ENCODE measurements at regions of chr5 and their contacts with region 1.

Region 1: GRCh38 chr5:59360130-59360555 is 533.4 kb downstream of the PDE4D start:
- DNase-seq: no peak
- ATAC-seq: no peak
- H3K4me3 ChIP-seq: no peak overlapping the region
- H3K27ac ChIP-seq: no peak overlapping the region
- H3K4me1 ChIP-seq: no peaks in the 10 kb centered on the region
- H3K27me3 ChIP-seq: no peaks in the 10 kb centered on the region
- CTCF ChIP-seq: no peak

Region 2: DNA sequence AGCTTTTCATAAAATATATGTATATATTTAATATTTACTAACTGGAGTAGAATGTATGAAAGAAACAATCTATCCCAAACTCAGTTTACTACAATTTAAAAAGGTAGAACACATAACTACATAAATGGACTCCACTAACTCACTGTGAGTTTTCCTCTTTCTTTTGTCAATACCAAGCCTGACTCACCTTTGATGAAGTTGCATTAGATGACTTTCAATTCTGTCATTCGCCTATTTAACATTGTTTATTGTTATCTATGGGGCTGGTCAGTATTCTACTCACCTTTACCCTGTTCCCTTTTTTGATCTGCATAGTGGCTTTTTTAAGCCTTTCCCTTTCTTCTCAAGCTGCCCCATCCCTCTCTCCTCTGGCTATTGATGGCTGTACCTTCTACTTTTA is 147.5 kb before region 1 on chr5:
- CTCF ChIA-PET with region 1: no interaction called
- POLR2A ChIA-PET with region 1: no interaction called
- intact Hi-C with region 1: no loop called
- DNase-seq: peak; percentile 34
- ATAC-seq: no peak
- H3K4me3 ChIP-seq: no peak overlapping the region
- H3K27ac ChIP-seq: no peak overlapping the region
- H3K4me1 ChIP-seq: no peaks in the 10 kb centered on the region
- H3K27me3 ChIP-seq: no peaks in the 10 kb centered on the region
- CTCF ChIP-seq: no peak

Region 3: DNA sequence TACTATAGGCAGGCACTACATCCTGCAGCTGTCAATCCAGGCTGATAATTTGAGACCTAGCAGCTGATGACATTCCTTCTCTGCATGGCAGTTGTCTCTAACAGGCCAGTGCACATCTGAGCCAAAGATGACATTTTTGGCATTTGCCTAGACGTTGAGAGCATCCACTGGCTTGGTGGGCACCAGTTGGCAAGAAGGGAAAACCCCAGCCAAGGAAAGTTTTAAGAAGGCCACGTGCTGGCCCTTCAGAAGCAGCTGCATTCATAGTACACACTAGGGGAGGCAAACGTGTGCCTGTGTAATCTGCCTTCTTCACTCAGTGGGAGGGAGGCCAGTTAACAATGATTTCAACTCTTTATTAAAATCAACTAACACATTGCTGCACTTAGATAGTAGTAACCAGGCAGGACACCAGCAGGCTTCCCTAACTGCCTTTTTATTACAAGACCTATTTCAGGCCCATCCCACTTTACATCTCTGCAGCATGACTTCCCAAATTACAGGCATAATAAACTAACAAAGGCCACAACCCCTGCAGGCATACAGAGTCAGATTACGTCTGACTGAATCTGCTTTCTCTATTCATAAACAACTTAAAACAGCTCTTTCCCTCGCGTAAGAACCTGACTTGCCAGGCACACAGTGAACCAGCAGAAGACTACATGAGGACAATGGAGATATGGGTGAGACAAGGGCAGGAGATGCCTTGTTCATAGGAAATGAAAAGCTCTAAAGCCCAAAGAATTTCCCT is 42.9 kb before region 1 on chr5:
- CTCF ChIA-PET with region 1: no interaction called
- POLR2A ChIA-PET with region 1: no interaction called
- intact Hi-C with region 1: loop called (anchors 5 kb)
- DNase-seq: peak; percentile 17
- ATAC-seq: peak; percentile 81
- H3K4me3 ChIP-seq: no peak overlapping the region
- H3K27ac ChIP-seq: no peak overlapping the region
- H3K4me1 ChIP-seq: no peaks in the 10 kb centered on the region
- H3K27me3 ChIP-seq: no peaks in the 10 kb centered on the region
- CTCF ChIP-seq: no peak

Region 4: GRCh38 chr5:59732301-59732700 is 372.2 kb after region 1 on chr5:
- CTCF ChIA-PET with region 1: no interaction called
- POLR2A ChIA-PET with region 1: no interaction called
- intact Hi-C with region 1: no loop called
- DNase-seq: no peak
- ATAC-seq: no peak
- H3K4me3 ChIP-seq: no peak overlapping the region
- H3K27ac ChIP-seq: no peak overlapping the region
- H3K4me1 ChIP-seq: no peaks in the 10 kb centered on the region
- H3K27me3 ChIP-seq: no peaks in the 10 kb centered on the region
- CTCF ChIP-seq: no peak